SK-N-SH (cell line): ENCODE measurements at regions of chr12 and their contacts with region 1.

Region 1: GRCh38 chr12:24778486-24779304 is 170.2 kb downstream of the BCAT1 start:
- DNase-seq: peak; percentile 11
- H3K4me3 ChIP-seq: no peak overlapping the region; a peak in 1 of 4 replicates
- H3K27ac ChIP-seq: no peak overlapping the region
- H3K4me1 ChIP-seq: peaks cover 0 to 10% of the 10 kb centered on the region in 2 experiments; a peak in 3 of 4 replicates
- H3K27me3 ChIP-seq: no peaks in the 10 kb centered on the region
- CTCF ChIP-seq: peak; percentile 64
- EP300 ChIP-seq: no peak
- RAD21 ChIP-seq: peak; percentile 75

Region 2: GRCh38 chr12:24767016-24767415 is 11.7 kb before region 1 on chr12:
- CTCF ChIA-PET with region 1: interaction called, 22 read pairs
- POLR2A ChIA-PET with region 1: no interaction called
- DNase-seq: no peak
- H3K4me3 ChIP-seq: no peak overlapping the region
- H3K27ac ChIP-seq: no peak overlapping the region
- H3K4me1 ChIP-seq: no peaks in the 10 kb centered on the region
- H3K27me3 ChIP-seq: no peaks in the 10 kb centered on the region
- CTCF ChIP-seq: no peak
- EP300 ChIP-seq: no peak
- RAD21 ChIP-seq: no peak